Activated naive CD8-positive, alpha-beta T cell treated with anti-CD3 and anti-CD28 coated beads, Interleukin-2, amount 10 ng/mL, durations not matched to agents 7 days and 5 days (primary cell): ENCODE measurements at regions of chr14 and their contacts with region 1.

Region 1: DNA sequence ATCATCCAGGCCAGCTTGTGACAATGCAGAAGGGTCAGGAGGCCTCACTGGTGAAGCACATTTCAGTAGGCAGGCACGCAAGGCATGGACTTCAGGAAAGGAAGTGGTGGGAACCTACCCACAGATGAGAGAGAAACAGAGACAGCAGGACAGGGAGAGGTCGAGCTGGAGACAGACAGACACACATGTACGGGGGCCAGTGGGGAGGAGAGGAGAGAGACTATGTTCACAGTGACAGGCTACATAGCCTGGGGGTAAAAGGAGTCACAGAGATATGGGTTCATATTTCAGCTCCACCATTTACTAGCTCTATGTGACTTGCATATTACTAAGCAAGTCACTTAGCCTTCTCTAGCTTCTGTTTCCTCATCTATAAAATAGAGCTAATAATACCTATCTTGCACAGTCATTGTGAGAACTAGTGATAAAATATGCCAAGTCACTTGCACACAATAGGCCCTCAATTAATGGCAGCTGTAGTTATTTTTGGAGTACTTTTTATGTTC is 91.1 kb upstream of the FUT8 start:
- DNase-seq: no peak
- ATAC-seq: peak; percentile 90
- H3K4me3 Mint-ChIP-seq: peak overlapping the region; percentile 25
- H3K27ac Mint-ChIP-seq: peak overlapping the region; percentile 84
- H3K4me1 Mint-ChIP-seq: peaks cover 53% of the 10 kb centered on the region
- H3K27me3 Mint-ChIP-seq: no peaks in the 10 kb centered on the region

Region 2: GRCh38 chr14:65287264-65288131 is 33.9 kb before region 1 on chr14:
- POLR2A ChIA-PET with region 1: interaction called, 15 read pairs
- DNase-seq: peak; percentile 80
- ATAC-seq: peak; percentile 76
- H3K4me3 Mint-ChIP-seq: peak overlapping the region; percentile 89
- H3K27ac Mint-ChIP-seq: peak overlapping the region; percentile 98
- H3K4me1 Mint-ChIP-seq: peaks cover 62% of the 10 kb centered on the region
- H3K27me3 Mint-ChIP-seq: no peaks in the 10 kb centered on the region

Region 3: GRCh38 chr14:65336191-65336591 is 14.8 kb after region 1 on chr14:
- POLR2A ChIA-PET with region 1: interaction called, 37 read pairs
- DNase-seq: peak; percentile 49
- ATAC-seq: peak; percentile 93
- H3K4me3 Mint-ChIP-seq: peak overlapping the region; percentile 88
- H3K27ac Mint-ChIP-seq: peak overlapping the region; percentile 90
- H3K4me1 Mint-ChIP-seq: peaks cover 59% of the 10 kb centered on the region
- H3K27me3 Mint-ChIP-seq: no peaks in the 10 kb centered on the region